Colonic mucosa (tissue), 4 donors: ENCODE measurements at regions of chr15 and their contacts with region 1.

Region 1: GRCh38 chr15:34367101-34368081 is at the start of gene LPCAT4:
- DNase-seq: peak; percentile 93
- H3K4me3 ChIP-seq: peak within 1 kb of the TSS; percentile 76
- H3K27ac ChIP-seq: peak within 1 kb of the TSS; percentile 100
- H3K4me1 ChIP-seq: peaks cover 8% of the 10 kb centered on the region
- H3K27me3 ChIP-seq: no peaks in the 10 kb centered on the region
- CTCF ChIP-seq: peak; percentile 96
- total RNA-seq, gene LPCAT4: 174 to 175 TPM

Region 2: DNA sequence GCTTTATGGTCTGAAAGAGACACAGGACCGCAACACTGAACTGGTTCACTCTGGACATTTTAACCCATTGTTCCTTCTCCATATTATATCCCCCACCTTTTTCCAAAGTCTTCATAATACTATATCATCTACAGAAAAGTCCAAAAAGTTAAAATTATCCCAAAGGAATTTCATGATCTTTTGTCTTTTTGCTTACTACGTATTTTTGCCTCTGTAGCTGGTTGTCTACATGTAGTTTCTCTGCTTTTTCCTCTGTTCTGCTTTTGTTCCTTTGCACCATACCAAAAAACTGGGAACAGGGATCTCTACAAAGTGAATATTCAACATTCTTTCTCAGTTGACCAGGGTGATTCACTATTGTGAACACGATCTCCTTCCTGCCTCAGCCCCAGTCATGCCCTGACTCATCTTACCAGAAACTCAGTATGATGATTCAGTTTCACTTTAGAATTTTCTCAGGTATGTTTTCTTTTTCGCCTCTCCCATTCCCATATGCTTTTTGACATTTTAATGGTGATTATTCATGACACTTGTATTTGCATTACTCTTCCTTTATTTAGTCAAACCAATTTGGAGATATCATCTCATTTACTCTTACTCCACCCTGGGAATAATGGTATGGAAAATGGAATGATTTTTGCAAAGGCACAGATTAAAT is 128.1 kb before region 1 on chr15:
- intact Hi-C with region 1: loop called (anchors 10 kb)
- DNase-seq: no peak
- H3K4me3 ChIP-seq: no peak overlapping the region
- H3K27ac ChIP-seq: no peak overlapping the region
- H3K4me1 ChIP-seq: no peaks in the 10 kb centered on the region
- H3K27me3 ChIP-seq: no peaks in the 10 kb centered on the region
- CTCF ChIP-seq: no peak

Region 3: GRCh38 chr15:34342737-34343575 is 24.4 kb before region 1 on chr15 and contains the starts of genes NOP10 and NUTM1:
- intact Hi-C with region 1: loop called (anchors 2 kb)
- DNase-seq: peak; percentile 97
- H3K4me3 ChIP-seq: peak within 1 kb of the TSS; percentile 65
- H3K27ac ChIP-seq: peak within 1 kb of the TSS; percentile 90
- H3K4me1 ChIP-seq: no peaks in the 10 kb centered on the region
- H3K27me3 ChIP-seq: no peaks in the 10 kb centered on the region
- CTCF ChIP-seq: peak; percentile 92
- total RNA-seq, gene NOP10: 143 to 184 TPM
- total RNA-seq, gene NUTM1: not detected